CD4-positive, alpha-beta T cell (primary cell): ENCODE measurements at regions of chr3 and their contacts with region 1.

Region 1: GRCh38 chr3:169863458-169863899 is 6.3 kb downstream of the LRRC31 start:
- DNase-seq: peak; percentile 43 to 87 (median 52)
- ATAC-seq: peak; percentile 81
- H3K4me3 ChIP-seq: no peak overlapping the region
- H3K4me3 Mint-ChIP-seq: no peak overlapping the region
- H3K27ac ChIP-seq: no peak overlapping the region
- H3K27ac Mint-ChIP-seq: no peak overlapping the region
- H3K4me1 ChIP-seq: peaks cover 19% of the 10 kb centered on the region
- H3K4me1 Mint-ChIP-seq: peaks cover 29% of the 10 kb centered on the region
- H3K27me3 ChIP-seq: no peaks in the 10 kb centered on the region
- H3K27me3 Mint-ChIP-seq: peaks cover 5% of the 10 kb centered on the region
- CTCF ChIP-seq: peak; percentile 98

Region 2: GRCh38 chr3:169041677-169042171 is 821.8 kb before region 1 on chr3:
- CTCF ChIA-PET with region 1: no interaction called
- POLR2A ChIA-PET with region 1: no interaction called
- intact Hi-C with region 1: no loop called
- DNase-seq: no peak
- ATAC-seq: no peak
- H3K4me3 ChIP-seq: no peak overlapping the region
- H3K4me3 Mint-ChIP-seq: no peak overlapping the region
- H3K27ac ChIP-seq: no peak overlapping the region
- H3K27ac Mint-ChIP-seq: no peak overlapping the region
- H3K4me1 ChIP-seq: no peaks in the 10 kb centered on the region
- H3K4me1 Mint-ChIP-seq: no peaks in the 10 kb centered on the region
- H3K27me3 ChIP-seq: no peaks in the 10 kb centered on the region
- H3K27me3 Mint-ChIP-seq: no peaks in the 10 kb centered on the region
- CTCF ChIP-seq: no peak

Region 3: GRCh38 chr3:169650503-169650902 is 213.0 kb before region 1 on chr3:
- CTCF ChIA-PET with region 1: no interaction called
- POLR2A ChIA-PET with region 1: no interaction called
- intact Hi-C with region 1: no loop called
- DNase-seq: no peak
- ATAC-seq: no peak
- H3K4me3 ChIP-seq: no peak overlapping the region
- H3K4me3 Mint-ChIP-seq: no peak overlapping the region
- H3K27ac ChIP-seq: no peak overlapping the region
- H3K27ac Mint-ChIP-seq: no peak overlapping the region
- H3K4me1 ChIP-seq: no peaks in the 10 kb centered on the region
- H3K4me1 Mint-ChIP-seq: no peaks in the 10 kb centered on the region
- H3K27me3 ChIP-seq: peaks cover 0 to 4% of the 10 kb centered on the region in 2 experiments
- H3K27me3 Mint-ChIP-seq: peaks cover 73% of the 10 kb centered on the region
- CTCF ChIP-seq: no peak

Region 4: DNA sequence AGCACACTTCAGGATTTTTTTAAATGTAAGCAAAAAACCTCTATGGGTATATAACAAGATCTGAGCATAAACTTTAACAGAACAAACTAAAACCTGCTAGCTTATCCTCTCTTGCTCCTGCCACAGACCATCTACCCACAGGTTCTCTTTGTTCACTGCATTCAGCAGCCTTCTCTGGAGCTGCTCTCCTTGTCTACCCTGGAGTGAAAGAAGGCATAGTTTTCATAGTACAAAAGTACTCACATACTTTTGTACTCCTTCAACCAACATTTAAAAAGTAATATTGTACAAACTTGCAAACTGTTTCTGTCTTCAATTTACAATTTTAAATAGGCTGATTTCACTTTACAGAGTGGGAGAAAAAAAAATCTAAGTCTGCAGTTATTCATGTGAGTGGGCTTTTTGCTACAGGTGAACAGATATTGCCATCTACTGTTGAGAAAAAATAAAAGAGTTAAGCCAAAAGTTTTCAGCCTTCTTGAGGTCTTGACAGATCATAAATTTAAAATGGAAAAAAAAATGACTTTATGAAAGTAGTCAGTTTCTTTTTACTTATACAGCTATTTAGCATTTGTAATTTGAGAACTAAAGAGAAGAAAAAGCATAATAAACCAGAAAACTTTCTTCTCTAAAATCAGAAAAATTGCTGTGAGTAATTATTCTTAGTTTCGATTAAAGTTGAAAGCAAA is 119.0 kb before region 1 on chr3:
- CTCF ChIA-PET with region 1: no interaction called
- POLR2A ChIA-PET with region 1: no interaction called
- intact Hi-C with region 1: no loop called
- DNase-seq: no peak
- ATAC-seq: no peak
- H3K4me3 ChIP-seq: no peak overlapping the region
- H3K4me3 Mint-ChIP-seq: no peak overlapping the region
- H3K27ac ChIP-seq: no peak overlapping the region
- H3K27ac Mint-ChIP-seq: no peak overlapping the region
- H3K4me1 ChIP-seq: no peaks in the 10 kb centered on the region
- H3K4me1 Mint-ChIP-seq: peaks cover 4% of the 10 kb centered on the region
- H3K27me3 ChIP-seq: peaks cover 5 to 6% of the 10 kb centered on the region in 2 experiments
- H3K27me3 Mint-ChIP-seq: peaks cover 33% of the 10 kb centered on the region
- CTCF ChIP-seq: peak; percentile 39

Region 5: GRCh38 chr3:169764452-169765274 is 98.8 kb before region 1 on chr3 and contains the start of gene TERC:
- CTCF ChIA-PET with region 1: no interaction called
- POLR2A ChIA-PET with region 1: no interaction called
- intact Hi-C with region 1: loop called (anchors 2 to 5 kb)
- DNase-seq: peak; percentile 82 to 98 (median 92)
- ATAC-seq: peak; percentile 82
- H3K4me3 ChIP-seq: peak within 1 kb of the TSS; percentile 93
- H3K4me3 Mint-ChIP-seq: peak within 1 kb of the TSS; percentile 98
- H3K27ac ChIP-seq: peak within 1 kb of the TSS; percentile 95 to 96
- H3K27ac Mint-ChIP-seq: peak within 1 kb of the TSS; percentile 97
- H3K4me1 ChIP-seq: peaks cover 27% of the 10 kb centered on the region
- H3K4me1 Mint-ChIP-seq: peaks cover 38% of the 10 kb centered on the region
- H3K27me3 ChIP-seq: no peaks in the 10 kb centered on the region
- H3K27me3 Mint-ChIP-seq: no peaks in the 10 kb centered on the region
- CTCF ChIP-seq: no peak
- total RNA-seq, gene TERC: 9.0 to 10.4 TPM

Region 6: GRCh38 chr3:170037463-170038433 is 174.3 kb after region 1 on chr3 and contains the start of gene GPR160:
- CTCF ChIA-PET with region 1: interaction called, 4 read pairs
- POLR2A ChIA-PET with region 1: interaction called, 7 read pairs
- intact Hi-C with region 1: loop called in 1 of 2 experiments (anchors 5 kb)
- DNase-seq: peak; percentile 67 to 89 (median 74)
- ATAC-seq: peak; percentile 64
- H3K4me3 ChIP-seq: peak within 1 kb of the TSS; percentile 83
- H3K4me3 Mint-ChIP-seq: peak within 1 kb of the TSS; percentile 93
- H3K27ac ChIP-seq: peak within 1 kb of the TSS in 1 of 2 donors; percentile 41
- H3K27ac Mint-ChIP-seq: peak within 1 kb of the TSS; percentile 67
- H3K4me1 ChIP-seq: peaks cover 43% of the 10 kb centered on the region
- H3K4me1 Mint-ChIP-seq: peaks cover 43% of the 10 kb centered on the region
- H3K27me3 ChIP-seq: no peaks in the 10 kb centered on the region
- H3K27me3 Mint-ChIP-seq: no peaks in the 10 kb centered on the region
- CTCF ChIP-seq: peak; percentile 85
- total RNA-seq, gene GPR160: 5.7 TPM

Region 7: DNA sequence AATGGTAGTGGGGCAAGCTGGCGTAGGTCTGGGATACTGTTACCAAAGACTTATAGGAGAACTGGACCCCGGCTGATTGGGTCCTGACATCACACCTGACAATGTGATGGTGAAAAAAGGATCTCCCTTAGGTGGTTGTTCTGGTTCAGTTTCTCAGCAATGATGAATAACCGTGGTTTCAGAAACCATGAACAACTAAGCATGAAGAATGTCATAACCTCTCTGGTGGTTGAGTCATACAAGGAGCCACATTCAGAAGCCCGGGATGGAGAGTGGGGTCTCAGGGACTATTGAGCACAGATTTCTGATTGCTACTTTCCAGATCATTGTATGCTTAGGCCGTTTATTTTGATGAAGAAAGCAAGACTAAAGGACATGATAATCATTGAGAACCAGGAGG is 191.7 kb after region 1 on chr3:
- CTCF ChIA-PET with region 1: no interaction called
- POLR2A ChIA-PET with region 1: interaction called, 4 read pairs
- intact Hi-C with region 1: loop called (anchors 1 to 5 kb)
- DNase-seq: no peak
- ATAC-seq: no peak
- H3K4me3 ChIP-seq: no peak overlapping the region
- H3K4me3 Mint-ChIP-seq: no peak overlapping the region
- H3K27ac ChIP-seq: no peak overlapping the region
- H3K27ac Mint-ChIP-seq: no peak overlapping the region
- H3K4me1 ChIP-seq: peaks cover 4% of the 10 kb centered on the region
- H3K4me1 Mint-ChIP-seq: peaks cover 11% of the 10 kb centered on the region
- H3K27me3 ChIP-seq: no peaks in the 10 kb centered on the region
- H3K27me3 Mint-ChIP-seq: no peaks in the 10 kb centered on the region
- CTCF ChIP-seq: no peak

Region 8: GRCh38 chr3:170078620-170079281 is 215.3 kb after region 1 on chr3:
- CTCF ChIA-PET with region 1: no interaction called
- POLR2A ChIA-PET with region 1: no interaction called
- intact Hi-C with region 1: no loop called
- DNase-seq: no peak
- ATAC-seq: no peak
- H3K4me3 ChIP-seq: no peak overlapping the region
- H3K4me3 Mint-ChIP-seq: no peak overlapping the region
- H3K27ac ChIP-seq: no peak overlapping the region
- H3K27ac Mint-ChIP-seq: no peak overlapping the region
- H3K4me1 ChIP-seq: no peaks in the 10 kb centered on the region
- H3K4me1 Mint-ChIP-seq: peaks cover 5% of the 10 kb centered on the region
- H3K27me3 ChIP-seq: no peaks in the 10 kb centered on the region
- H3K27me3 Mint-ChIP-seq: no peaks in the 10 kb centered on the region
- CTCF ChIP-seq: no peak

Region 9: GRCh38 chr3:170689893-170690660 is 826.6 kb after region 1 on chr3:
- CTCF ChIA-PET with region 1: no interaction called
- POLR2A ChIA-PET with region 1: no interaction called
- intact Hi-C with region 1: loop called in 1 of 2 experiments (anchors 10 kb)
- DNase-seq: peak; percentile 1 to 53 (median 18)
- ATAC-seq: no peak
- H3K4me3 ChIP-seq: no peak overlapping the region
- H3K4me3 Mint-ChIP-seq: no peak overlapping the region
- H3K27ac ChIP-seq: no peak overlapping the region
- H3K27ac Mint-ChIP-seq: no peak overlapping the region
- H3K4me1 ChIP-seq: no peaks in the 10 kb centered on the region
- H3K4me1 Mint-ChIP-seq: no peaks in the 10 kb centered on the region
- H3K27me3 ChIP-seq: no peaks in the 10 kb centered on the region
- H3K27me3 Mint-ChIP-seq: no peaks in the 10 kb centered on the region
- CTCF ChIP-seq: peak; percentile 57

Region 10: GRCh38 chr3:170811928-170812591 is 948.6 kb after region 1 on chr3:
- CTCF ChIA-PET with region 1: no interaction called
- POLR2A ChIA-PET with region 1: no interaction called
- intact Hi-C with region 1: loop called (anchors 2 to 5 kb)
- DNase-seq: peak; percentile 39 to 80 (median 54)
- ATAC-seq: peak; percentile 96
- H3K4me3 ChIP-seq: no peak overlapping the region
- H3K4me3 Mint-ChIP-seq: no peak overlapping the region
- H3K27ac ChIP-seq: no peak overlapping the region
- H3K27ac Mint-ChIP-seq: no peak overlapping the region
- H3K4me1 ChIP-seq: no peaks in the 10 kb centered on the region
- H3K4me1 Mint-ChIP-seq: no peaks in the 10 kb centered on the region
- H3K27me3 ChIP-seq: no peaks in the 10 kb centered on the region
- H3K27me3 Mint-ChIP-seq: no peaks in the 10 kb centered on the region
- CTCF ChIP-seq: peak; percentile 87